ENCODE measurements at regions of chr12 and their contacts with region 1.

Region 1: DNA sequence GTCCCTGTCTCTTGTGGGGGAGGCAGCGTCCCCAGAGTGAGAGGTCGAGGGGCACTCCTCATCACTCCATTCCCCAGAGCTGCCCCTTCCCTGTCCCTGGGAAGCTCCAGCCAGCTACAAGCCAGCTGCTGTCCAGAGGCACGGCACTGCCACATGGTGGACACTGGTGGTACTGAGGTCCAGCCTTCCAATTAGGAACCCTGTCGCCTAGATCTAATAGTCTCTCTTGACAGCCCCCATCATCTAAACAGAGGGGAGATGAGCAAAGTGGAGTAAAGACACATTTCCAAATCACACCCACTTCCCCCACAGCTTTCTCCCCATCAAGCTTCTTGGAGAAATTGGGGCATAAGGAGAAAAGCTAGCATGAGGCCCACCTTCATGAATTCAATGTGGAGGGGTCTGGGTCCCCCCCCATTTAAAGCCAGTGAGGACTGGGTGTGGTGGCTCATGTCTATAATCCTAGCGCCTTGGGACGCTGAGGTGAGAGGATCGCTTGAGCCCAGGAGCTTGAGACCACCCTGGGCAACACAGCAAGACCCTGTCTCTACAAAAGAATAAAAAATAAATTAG is 2.1 kb upstream of the INHBE start:
- DNase-seq: peak; percentile 84
- ATAC-seq: peak; percentile 77
- H3K4me3 ChIP-seq: no peak overlapping the region
- H3K27ac ChIP-seq: peak overlapping the region; percentile 53; the same call in 1 of the 2 replicates
- H3K4me1 ChIP-seq: peaks cover 33% of the 10 kb centered on the region
- H3K27me3 ChIP-seq: no peaks in the 10 kb centered on the region
- CTCF ChIP-seq: peak; percentile 98
- POLR2A ChIP-seq: no peak; the same call in 1 of the 2 replicates
- RAD21 ChIP-seq: peak; percentile 98

Region 2: GRCh38 chr12:57182921-57183790 is 269.9 kb before region 1 on chr12:
- CTCF ChIA-PET with region 1: no interaction called
- POLR2A ChIA-PET with region 1: no interaction called
- dilution Hi-C with region 1: no loop called
- in situ Hi-C with region 1: no loop called
- intact Hi-C with region 1: no loop called
- DNase-seq: peak; percentile 59
- ATAC-seq: peak; percentile 89
- H3K4me3 ChIP-seq: no peak overlapping the region
- H3K27ac ChIP-seq: no peak overlapping the region
- H3K4me1 ChIP-seq: no peaks in the 10 kb centered on the region
- H3K27me3 ChIP-seq: no peaks in the 10 kb centered on the region
- CTCF ChIP-seq: peak; percentile 78
- POLR2A ChIP-seq: no peak
- RAD21 ChIP-seq: peak; percentile 81

Region 3: GRCh38 chr12:57263096-57263495 is 189.9 kb before region 1 on chr12:
- CTCF ChIA-PET with region 1: interaction called, 9 read pairs
- POLR2A ChIA-PET with region 1: no interaction called
- dilution Hi-C with region 1: no loop called
- in situ Hi-C with region 1: loop called (anchors 5 kb)
- intact Hi-C with region 1: loop called (anchors 1 kb)
- DNase-seq: no peak
- ATAC-seq: no peak
- H3K4me3 ChIP-seq: no peak overlapping the region
- H3K27ac ChIP-seq: no peak overlapping the region
- H3K4me1 ChIP-seq: no peaks in the 10 kb centered on the region; the same call in 1 of the 2 replicates
- H3K27me3 ChIP-seq: no peaks in the 10 kb centered on the region
- CTCF ChIP-seq: no peak
- POLR2A ChIP-seq: no peak
- RAD21 ChIP-seq: no peak

Region 4: GRCh38 chr12:57270966-57271470 is 182.0 kb before region 1 on chr12:
- CTCF ChIA-PET with region 1: interaction called, 5 read pairs
- POLR2A ChIA-PET with region 1: interaction called, 13 read pairs
- dilution Hi-C with region 1: no loop called
- in situ Hi-C with region 1: loop called (anchors 5 kb)
- intact Hi-C with region 1: no loop called
- DNase-seq: no peak
- ATAC-seq: no peak
- H3K4me3 ChIP-seq: no peak overlapping the region
- H3K27ac ChIP-seq: no peak overlapping the region
- H3K4me1 ChIP-seq: peaks cover 5% of the 10 kb centered on the region; the same call in 1 of the 2 replicates
- H3K27me3 ChIP-seq: no peaks in the 10 kb centered on the region
- CTCF ChIP-seq: no peak
- POLR2A ChIP-seq: no peak
- RAD21 ChIP-seq: no peak

Region 5: GRCh38 chr12:57372233-57372632 is 80.8 kb before region 1 on chr12:
- CTCF ChIA-PET with region 1: interaction called, 5 read pairs
- POLR2A ChIA-PET with region 1: no interaction called
- dilution Hi-C with region 1: no loop called
- in situ Hi-C with region 1: no loop called
- intact Hi-C with region 1: loop called (anchors 5 kb)
- DNase-seq: peak; percentile 78
- ATAC-seq: peak; percentile 77
- H3K4me3 ChIP-seq: no peak overlapping the region
- H3K27ac ChIP-seq: peak overlapping the region; percentile 41; the same call in 1 of the 2 replicates
- H3K4me1 ChIP-seq: peaks cover 8% of the 10 kb centered on the region
- H3K27me3 ChIP-seq: no peaks in the 10 kb centered on the region
- CTCF ChIP-seq: no peak
- POLR2A ChIP-seq: no peak
- RAD21 ChIP-seq: no peak

Region 6: GRCh38 chr12:57517187-57517586 is 64.2 kb after region 1 on chr12:
- CTCF ChIA-PET with region 1: no interaction called
- POLR2A ChIA-PET with region 1: no interaction called
- dilution Hi-C with region 1: no loop called
- in situ Hi-C with region 1: no loop called
- intact Hi-C with region 1: no loop called
- DNase-seq: peak; percentile 72
- ATAC-seq: no peak
- H3K4me3 ChIP-seq: no peak overlapping the region
- H3K27ac ChIP-seq: peak overlapping the region; percentile 15; the same call in 1 of the 2 replicates
- H3K4me1 ChIP-seq: peaks cover 12% of the 10 kb centered on the region
- H3K27me3 ChIP-seq: no peaks in the 10 kb centered on the region
- CTCF ChIP-seq: no peak
- POLR2A ChIP-seq: peak; percentile 31; the same call in 1 of the 2 replicates
- RAD21 ChIP-seq: no peak

Region 7: DNA sequence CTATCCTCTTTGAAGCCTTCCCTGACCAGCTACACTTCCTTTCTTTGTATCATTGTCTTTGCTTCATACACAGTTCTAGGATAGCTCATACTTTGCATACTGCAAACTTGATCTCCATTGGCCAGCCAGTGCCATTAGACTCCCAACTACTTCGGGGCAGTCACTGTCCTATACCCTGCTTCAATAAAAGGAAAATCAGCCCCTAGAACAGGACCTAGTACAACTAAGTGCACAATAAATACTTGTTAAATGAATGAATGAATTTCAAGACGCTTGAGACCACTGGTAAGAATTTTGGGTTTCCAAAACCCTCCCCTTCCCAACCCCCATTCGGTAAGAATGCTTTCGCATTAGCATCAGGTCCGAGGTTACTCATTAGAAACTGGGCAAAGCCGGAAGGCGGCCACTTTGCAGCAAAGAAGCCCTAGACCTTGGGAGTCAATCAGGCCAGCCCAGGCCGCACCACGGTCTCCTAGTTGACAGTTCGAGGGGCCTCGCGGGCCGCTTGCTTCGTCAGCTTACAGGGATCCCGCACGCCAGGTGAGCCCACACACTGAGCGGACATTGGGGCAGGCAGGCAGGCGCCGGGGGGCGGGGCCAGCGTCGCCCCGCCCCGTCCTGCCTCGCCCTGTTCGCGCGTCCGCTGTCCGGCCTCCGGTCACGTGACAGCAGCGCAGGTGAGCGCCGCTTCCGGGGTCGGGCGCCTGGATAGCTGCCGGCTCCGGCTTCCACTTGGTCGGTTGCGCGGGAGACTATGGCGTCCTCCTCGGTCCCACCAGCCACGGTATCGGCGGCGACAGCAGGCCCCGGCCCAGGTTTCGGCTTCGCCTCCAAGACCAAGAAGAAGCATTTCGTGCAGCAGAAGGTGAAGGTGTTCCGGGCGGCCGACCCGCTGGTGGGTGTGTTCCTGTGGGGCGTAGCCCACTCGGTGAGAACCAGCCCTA is 137.8 kb after region 1 on chr12 and contains the start of gene PIP4K2C:
- CTCF ChIA-PET with region 1: no interaction called
- POLR2A ChIA-PET with region 1: no interaction called
- dilution Hi-C with region 1: no loop called
- in situ Hi-C with region 1: no loop called
- intact Hi-C with region 1: no loop called
- DNase-seq: peak; percentile 23
- ATAC-seq: peak; percentile 94
- H3K4me3 ChIP-seq: peak within 1 kb of the TSS; percentile 88
- H3K27ac ChIP-seq: no peak within 1 kb of the TSS; the same call in 1 of the 2 replicates
- H3K4me1 ChIP-seq: peaks cover 5% of the 10 kb centered on the region; the same call in 1 of the 2 replicates
- H3K27me3 ChIP-seq: peaks cover 16% of the 10 kb centered on the region
- CTCF ChIP-seq: no peak
- POLR2A ChIP-seq: no peak
- RAD21 ChIP-seq: no peak
- total RNA-seq, gene PIP4K2C: 12.5 and 14.4 TPM in 2 replicates

Measured in IMR-90 (cell line).